Naive thymus-derived CD4-positive, alpha-beta T cell (primary cell): ENCODE measurements at regions of chr5 and their contacts with region 1.

Region 1: GRCh38 chr5:159106569-159107282 is 7.0 kb upstream of the EBF1 start:
- DNase-seq: peak; percentile 40 to 73 (median 60)
- ATAC-seq: peak; percentile 80
- H3K4me3 ChIP-seq: peak overlapping the region; percentile 56
- H3K4me3 Mint-ChIP-seq: peak overlapping the region; percentile 76 to 95 (median 88)
- H3K27ac ChIP-seq: no peak overlapping the region
- H3K27ac Mint-ChIP-seq: peak overlapping the region in 2 of 9 donors; percentile 36 to 61
- H3K4me1 ChIP-seq: peaks cover 0 to 16% of the 10 kb centered on the region in 2 donors
- H3K4me1 Mint-ChIP-seq: peaks cover 8 to 28% (median 24%) of the 10 kb centered on the region in 7 donors
- H3K27me3 ChIP-seq: peaks cover 6 to 26% of the 10 kb centered on the region in 2 donors
- H3K27me3 Mint-ChIP-seq: peaks cover 48 to 80% (median 60%) of the 10 kb centered on the region in 5 donors

Region 2: DNA sequence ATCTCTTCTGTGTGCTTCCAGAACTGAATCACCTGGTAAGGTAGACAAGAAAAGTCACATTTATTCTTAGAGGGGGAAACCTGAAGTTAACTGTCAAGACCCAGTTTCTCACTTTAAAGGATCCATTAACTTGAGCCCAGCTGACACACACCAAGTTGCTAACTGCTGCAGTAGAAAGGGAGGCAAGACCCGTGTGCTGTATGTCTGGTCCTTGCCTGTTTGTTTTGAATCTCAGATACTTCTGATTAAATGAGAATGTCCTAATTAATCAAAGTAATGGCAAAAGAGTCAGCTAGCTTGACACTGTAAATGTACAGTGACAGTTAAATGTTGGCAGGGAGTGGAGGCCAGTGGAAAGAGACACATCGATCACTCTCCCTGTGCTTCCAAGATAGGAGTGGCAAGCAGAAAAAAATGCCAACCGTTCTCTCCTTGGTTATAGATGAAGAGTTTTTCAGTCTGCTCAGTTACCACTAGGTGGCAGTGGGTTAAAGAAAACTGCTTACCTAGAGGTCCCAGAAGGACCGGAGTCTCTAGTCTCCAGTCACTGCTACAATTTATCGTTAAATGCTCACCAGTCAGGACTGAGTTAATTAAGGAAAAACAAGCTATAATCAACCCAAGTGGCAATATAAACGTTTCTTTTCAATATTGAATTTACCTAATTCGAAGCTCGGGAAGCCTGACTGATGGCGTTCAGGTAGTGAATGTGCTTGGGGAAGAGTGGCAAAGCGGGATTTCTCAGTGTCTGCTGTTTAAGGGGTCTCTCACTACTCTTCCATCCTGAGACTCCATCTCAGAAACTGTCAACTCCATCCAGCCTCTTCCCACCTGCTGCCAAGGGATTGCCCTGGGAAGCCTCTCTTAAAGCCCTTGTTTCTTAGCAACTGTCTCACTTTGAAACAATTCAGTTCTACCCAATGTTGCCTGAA is 1344.8 kb before region 1 on chr5:
- CTCF ChIA-PET with region 1: no interaction called
- POLR2A ChIA-PET with region 1: no interaction called
- intact Hi-C with region 1: loop called in 1 of 2 experiments (anchors 1 kb)
- DNase-seq: peak in 6 of 9 donors; percentile 12 to 44 (median 34)
- ATAC-seq: peak; percentile 88
- H3K4me3 ChIP-seq: no peak overlapping the region
- H3K4me3 Mint-ChIP-seq: no peak overlapping the region
- H3K27ac ChIP-seq: no peak overlapping the region
- H3K27ac Mint-ChIP-seq: no peak overlapping the region
- H3K4me1 ChIP-seq: no peaks in the 10 kb centered on the region
- H3K4me1 Mint-ChIP-seq: peaks cover 0 to 5% (median 0%) of the 10 kb centered on the region in 7 donors
- H3K27me3 ChIP-seq: no peaks in the 10 kb centered on the region
- H3K27me3 Mint-ChIP-seq: peaks cover 0 to 6% (median 0%) of the 10 kb centered on the region in 5 donors

Region 3: DNA sequence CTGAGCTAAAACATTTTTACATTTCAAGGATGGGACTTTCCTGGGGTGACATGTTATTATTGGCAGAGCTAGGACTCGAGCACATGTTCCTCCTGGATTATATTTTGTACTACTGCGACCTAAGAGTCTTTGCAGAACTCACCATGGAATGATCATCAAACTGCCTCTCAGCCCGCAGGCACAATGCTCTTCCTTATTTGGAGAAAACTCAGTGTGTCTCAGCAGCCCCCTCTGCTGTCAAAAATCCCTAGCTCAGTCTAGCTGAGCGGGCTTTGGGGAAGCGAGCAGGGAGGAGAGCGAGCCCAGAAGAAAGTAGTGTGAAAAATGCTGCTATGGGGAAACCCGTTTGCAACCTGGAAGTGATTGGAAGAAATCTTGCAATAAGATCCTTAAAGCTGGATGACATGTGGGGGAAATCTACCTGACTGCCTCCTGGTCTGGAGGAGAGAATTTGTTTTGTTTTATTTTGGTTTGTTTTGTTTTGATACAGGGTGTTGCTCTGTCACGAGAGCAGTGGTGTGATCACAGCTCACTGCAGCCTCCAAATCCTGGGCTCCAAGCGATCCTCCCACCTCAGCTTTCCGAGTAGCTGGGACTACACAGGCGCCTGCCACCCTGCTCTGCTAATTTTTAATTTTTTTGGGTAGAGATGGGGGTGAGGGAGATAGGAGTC is 1157.9 kb before region 1 on chr5:
- CTCF ChIA-PET with region 1: interaction called, 4 read pairs
- POLR2A ChIA-PET with region 1: no interaction called
- intact Hi-C with region 1: loop called in 1 of 2 experiments (anchors 2 kb)
- DNase-seq: peak; percentile 44 to 78 (median 69)
- ATAC-seq: peak; percentile 97
- H3K4me3 ChIP-seq: no peak overlapping the region
- H3K4me3 Mint-ChIP-seq: peak overlapping the region in 4 of 10 donors; percentile 1 to 44 (median 4)
- H3K27ac ChIP-seq: no peak overlapping the region
- H3K27ac Mint-ChIP-seq: no peak overlapping the region
- H3K4me1 ChIP-seq: no peaks in the 10 kb centered on the region
- H3K4me1 Mint-ChIP-seq: peaks cover 5 to 10% (median 6%) of the 10 kb centered on the region in 7 donors
- H3K27me3 ChIP-seq: no peaks in the 10 kb centered on the region
- H3K27me3 Mint-ChIP-seq: peaks cover 5 to 27% (median 9%) of the 10 kb centered on the region in 5 donors

Region 4: GRCh38 chr5:158170060-158170459 is 936.7 kb before region 1 on chr5:
- CTCF ChIA-PET with region 1: interaction called, 38 read pairs
- POLR2A ChIA-PET with region 1: no interaction called
- intact Hi-C with region 1: loop called (anchors 1 kb)
- DNase-seq: no peak
- ATAC-seq: no peak
- H3K4me3 ChIP-seq: no peak overlapping the region
- H3K4me3 Mint-ChIP-seq: no peak overlapping the region
- H3K27ac ChIP-seq: no peak overlapping the region
- H3K27ac Mint-ChIP-seq: no peak overlapping the region
- H3K4me1 ChIP-seq: no peaks in the 10 kb centered on the region
- H3K4me1 Mint-ChIP-seq: peaks cover 0 to 2% (median 0%) of the 10 kb centered on the region in 7 donors
- H3K27me3 ChIP-seq: no peaks in the 10 kb centered on the region
- H3K27me3 Mint-ChIP-seq: peaks cover 2 to 13% (median 10%) of the 10 kb centered on the region in 5 donors

Region 5: GRCh38 chr5:158511454-158511853 is 595.3 kb before region 1 on chr5:
- CTCF ChIA-PET with region 1: no interaction called
- POLR2A ChIA-PET with region 1: no interaction called
- intact Hi-C with region 1: loop called in 1 of 2 experiments (anchors 10 kb)
- DNase-seq: peak in 2 of 9 donors; percentile 7 to 20
- ATAC-seq: peak; percentile 44
- H3K4me3 ChIP-seq: no peak overlapping the region
- H3K4me3 Mint-ChIP-seq: peak overlapping the region in 3 of 10 donors; percentile 17 to 37 (median 30)
- H3K27ac ChIP-seq: no peak overlapping the region
- H3K27ac Mint-ChIP-seq: peak overlapping the region in 7 of 9 donors; percentile 11 to 81 (median 41)
- H3K4me1 ChIP-seq: peaks cover 0 to 21% of the 10 kb centered on the region in 2 donors
- H3K4me1 Mint-ChIP-seq: peaks cover 10 to 51% (median 41%) of the 10 kb centered on the region in 7 donors
- H3K27me3 ChIP-seq: no peaks in the 10 kb centered on the region
- H3K27me3 Mint-ChIP-seq: no peaks in the 10 kb centered on the region

Region 6: GRCh38 chr5:159003037-159004030 is 103.4 kb before region 1 on chr5:
- CTCF ChIA-PET with region 1: interaction called, 4 read pairs
- POLR2A ChIA-PET with region 1: no interaction called
- intact Hi-C with region 1: loop called in 1 of 2 experiments (anchors 2 kb)
- DNase-seq: peak in 6 of 9 donors; percentile 34 to 69 (median 57)
- ATAC-seq: peak; percentile 42
- H3K4me3 ChIP-seq: no peak overlapping the region
- H3K4me3 Mint-ChIP-seq: peak overlapping the region in 6 of 10 donors; percentile 31 to 58 (median 49)
- H3K27ac ChIP-seq: no peak overlapping the region
- H3K27ac Mint-ChIP-seq: peak overlapping the region in 3 of 9 donors; percentile 21 to 46 (median 35)
- H3K4me1 ChIP-seq: peaks cover 0 to 11% of the 10 kb centered on the region in 2 donors
- H3K4me1 Mint-ChIP-seq: peaks cover 0 to 27% (median 17%) of the 10 kb centered on the region in 7 donors
- H3K27me3 ChIP-seq: no peaks in the 10 kb centered on the region
- H3K27me3 Mint-ChIP-seq: peaks cover 7 to 32% (median 17%) of the 10 kb centered on the region in 5 donors